ENCODE measurements at regions of chr5 and their contacts with region 1.

Region 1: DNA sequence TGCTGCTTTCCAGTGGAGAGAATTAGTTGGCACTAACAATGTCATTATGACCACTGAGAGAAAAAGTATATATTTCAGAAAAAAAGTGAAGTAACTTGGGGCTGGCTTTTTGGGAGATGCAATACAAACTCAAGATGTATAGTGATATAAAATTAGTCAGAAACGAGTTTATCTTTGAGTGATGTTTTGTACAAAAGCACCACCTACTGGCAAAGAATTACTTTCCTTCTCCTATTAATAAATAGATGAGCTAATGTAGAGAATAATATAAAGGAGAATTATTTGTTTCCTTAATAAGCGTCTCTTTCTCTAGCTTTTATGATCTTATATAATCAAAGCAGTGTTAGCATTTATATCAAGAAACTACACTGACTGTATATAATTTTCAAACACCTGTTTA is 158.8 kb downstream of the MEF2C start:
- DNase-seq: no peak
- H3K4me3 Mint-ChIP-seq: no peak overlapping the region
- H3K27ac Mint-ChIP-seq: no peak overlapping the region
- H3K4me1 Mint-ChIP-seq: no peaks in the 10 kb centered on the region
- H3K27me3 Mint-ChIP-seq: no peaks in the 10 kb centered on the region
- CTCF ChIP-seq: peak; percentile 43

Region 2: GRCh38 chr5:87251591-87252282 is 1472.5 kb before region 1 on chr5:
- CTCF ChIA-PET with region 1: no interaction called
- intact Hi-C with region 1: no loop called
- DNase-seq: no peak
- H3K4me3 Mint-ChIP-seq: no peak overlapping the region
- H3K27ac Mint-ChIP-seq: no peak overlapping the region
- H3K4me1 Mint-ChIP-seq: peaks cover 14% of the 10 kb centered on the region
- H3K27me3 Mint-ChIP-seq: no peaks in the 10 kb centered on the region
- CTCF ChIP-seq: no peak

Region 3: DNA sequence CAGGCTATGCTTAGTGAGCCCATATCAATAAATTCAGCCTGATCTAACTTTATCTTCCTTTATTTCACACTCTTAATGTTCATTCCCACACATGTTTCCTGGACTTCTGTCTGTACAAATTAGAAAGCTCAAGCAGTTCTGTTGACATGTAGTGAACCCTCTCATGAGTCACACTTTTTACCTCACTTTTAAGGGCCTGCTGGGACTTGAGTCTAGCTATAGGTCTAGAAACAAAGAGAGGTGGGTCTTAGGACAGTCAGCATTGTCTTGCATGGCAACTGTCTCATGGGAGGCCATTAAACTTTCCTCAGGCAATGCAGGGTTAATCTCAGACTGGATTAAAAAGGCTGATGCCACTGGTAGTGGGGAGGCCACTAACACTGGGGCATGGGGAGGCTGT is 1302.9 kb before region 1 on chr5:
- CTCF ChIA-PET with region 1: no interaction called
- intact Hi-C with region 1: loop called (anchors 1 kb)
- DNase-seq: no peak
- H3K4me3 Mint-ChIP-seq: no peak overlapping the region
- H3K27ac Mint-ChIP-seq: no peak overlapping the region
- H3K4me1 Mint-ChIP-seq: peaks cover 9% of the 10 kb centered on the region
- H3K27me3 Mint-ChIP-seq: no peaks in the 10 kb centered on the region
- CTCF ChIP-seq: no peak

Region 4: DNA sequence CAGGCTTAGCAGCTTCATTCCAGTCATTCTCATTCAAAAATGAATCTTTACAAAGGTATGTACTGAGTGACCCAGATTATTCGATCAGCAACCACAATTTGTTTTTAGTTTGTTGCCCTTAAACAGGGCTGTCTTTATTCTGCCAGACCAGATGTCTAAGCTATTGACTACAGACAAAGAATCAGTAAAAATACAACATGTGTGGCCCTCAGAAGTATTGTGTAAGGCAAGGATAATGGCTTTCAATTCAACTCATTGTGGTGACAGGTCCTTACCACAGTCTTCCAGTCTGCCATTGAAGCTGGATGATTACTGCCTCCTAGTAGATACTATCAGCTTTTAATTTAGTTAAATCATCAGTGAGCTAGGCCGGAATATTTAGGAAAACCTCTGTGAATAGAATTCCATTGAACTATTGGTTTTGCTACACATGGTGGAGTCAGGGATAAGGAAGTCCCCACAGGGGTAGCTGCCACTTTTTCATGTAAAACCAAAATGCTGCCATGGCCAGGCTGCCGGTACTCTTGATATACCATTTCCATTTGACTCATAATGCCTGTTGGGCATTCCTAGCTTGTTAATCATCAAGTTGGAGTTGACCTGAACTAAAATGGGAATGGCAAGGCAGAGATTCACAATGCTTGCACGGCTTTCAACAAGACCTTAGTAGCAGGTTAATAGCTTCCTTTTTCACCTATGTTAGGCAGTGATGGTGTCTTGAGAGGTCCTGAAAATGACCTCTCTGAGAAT is 16.8 kb before region 1 on chr5:
- CTCF ChIA-PET with region 1: interaction called, 12 read pairs
- intact Hi-C with region 1: no loop called
- DNase-seq: no peak
- H3K4me3 Mint-ChIP-seq: no peak overlapping the region
- H3K27ac Mint-ChIP-seq: no peak overlapping the region
- H3K4me1 Mint-ChIP-seq: peaks cover 9% of the 10 kb centered on the region
- H3K27me3 Mint-ChIP-seq: no peaks in the 10 kb centered on the region
- CTCF ChIP-seq: no peak

Region 5: DNA sequence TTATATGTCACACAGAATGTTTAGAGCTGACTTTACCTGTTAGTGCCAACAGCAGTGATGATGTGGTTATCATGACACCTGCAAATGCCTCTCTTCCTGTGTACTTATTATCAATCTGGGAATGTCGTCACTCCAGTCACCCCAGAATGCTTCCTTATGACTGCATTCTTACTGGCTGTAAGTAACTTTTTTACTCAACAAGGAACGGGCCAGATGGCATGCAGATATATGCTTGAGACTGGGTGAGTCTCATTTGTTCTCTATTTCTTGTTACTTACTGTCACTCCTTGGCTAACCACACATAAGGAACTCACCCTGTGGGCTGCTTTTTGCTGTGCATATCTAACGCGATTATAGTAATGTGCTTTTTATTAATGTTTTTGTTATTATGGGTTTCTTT is 544.3 kb after region 1 on chr5:
- CTCF ChIA-PET with region 1: no interaction called
- intact Hi-C with region 1: no loop called
- DNase-seq: no peak
- H3K4me3 Mint-ChIP-seq: no peak overlapping the region
- H3K27ac Mint-ChIP-seq: no peak overlapping the region
- H3K4me1 Mint-ChIP-seq: peaks cover 6% of the 10 kb centered on the region
- H3K27me3 Mint-ChIP-seq: no peaks in the 10 kb centered on the region
- CTCF ChIP-seq: no peak

Measured in Calu3 (cell line).